Caco-2 (cell line): ENCODE measurements at regions of chr7 and their contacts with region 1.

Region 1: GRCh38 chr7:36487756-36488336 is 98.2 kb downstream of the ANLN start:
- DNase-seq: peak in 1 of 2 experiments; percentile 55
- H3K4me3 ChIP-seq: no peak overlapping the region
- H3K4me3 Mint-ChIP-seq: no peak overlapping the region
- H3K27ac Mint-ChIP-seq: no peak overlapping the region
- H3K4me1 ChIP-seq: peaks cover 12% of the 10 kb centered on the region; the same call in 1 of the 2 replicates
- H3K4me1 Mint-ChIP-seq: no peaks in the 10 kb centered on the region
- H3K27me3 ChIP-seq: no peaks in the 10 kb centered on the region
- H3K27me3 Mint-ChIP-seq: no peaks in the 10 kb centered on the region
- CTCF ChIP-seq: peak; percentile 74 to 78

Region 2: GRCh38 chr7:36440880-36441279 is 47.0 kb before region 1 on chr7:
- CTCF ChIA-PET with region 1: interaction called, 4 read pairs
- POLR2A ChIA-PET with region 1: no interaction called
- intact Hi-C with region 1: loop called (anchors 1 kb)
- DNase-seq: peak in 1 of 2 experiments; percentile 24
- H3K4me3 ChIP-seq: no peak overlapping the region
- H3K4me3 Mint-ChIP-seq: no peak overlapping the region
- H3K27ac Mint-ChIP-seq: no peak overlapping the region
- H3K4me1 ChIP-seq: peaks cover 13% of the 10 kb centered on the region
- H3K4me1 Mint-ChIP-seq: no peaks in the 10 kb centered on the region
- H3K27me3 ChIP-seq: no peaks in the 10 kb centered on the region
- H3K27me3 Mint-ChIP-seq: no peaks in the 10 kb centered on the region
- CTCF ChIP-seq: peak; percentile 36 to 42

Region 3: DNA sequence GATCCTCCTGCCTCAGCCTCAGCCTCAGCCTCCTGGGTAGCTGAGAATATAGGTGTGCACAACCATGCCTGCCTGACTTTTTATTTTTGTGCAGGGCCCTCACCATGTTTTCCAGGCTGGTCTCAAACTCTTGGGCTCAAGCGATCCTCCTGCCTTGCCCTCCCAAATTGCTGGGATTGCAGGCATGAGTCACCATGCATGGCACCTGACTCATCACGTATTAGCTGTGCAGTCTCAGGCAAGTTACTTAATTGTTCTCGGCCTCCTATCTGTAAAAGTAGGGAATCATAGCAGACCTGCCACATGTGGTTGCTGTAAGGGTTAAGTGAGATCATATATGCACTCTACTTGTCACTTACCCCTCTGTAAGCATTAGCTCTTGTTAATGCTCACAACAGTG is 19.0 kb after region 1 on chr7:
- CTCF ChIA-PET with region 1: no interaction called
- POLR2A ChIA-PET with region 1: no interaction called
- intact Hi-C with region 1: no loop called
- DNase-seq: no peak
- H3K4me3 ChIP-seq: no peak overlapping the region
- H3K4me3 Mint-ChIP-seq: no peak overlapping the region
- H3K27ac Mint-ChIP-seq: no peak overlapping the region
- H3K4me1 ChIP-seq: no peaks in the 10 kb centered on the region
- H3K4me1 Mint-ChIP-seq: no peaks in the 10 kb centered on the region
- H3K27me3 ChIP-seq: no peaks in the 10 kb centered on the region
- H3K27me3 Mint-ChIP-seq: peaks cover 2% of the 10 kb centered on the region
- CTCF ChIP-seq: no peak

Region 4: GRCh38 chr7:36670585-36671431 is 183.0 kb after region 1 on chr7:
- CTCF ChIA-PET with region 1: interaction called, 8 read pairs
- POLR2A ChIA-PET with region 1: no interaction called
- intact Hi-C with region 1: loop called (anchors 1 kb)
- DNase-seq: peak; percentile 57 to 74
- H3K4me3 ChIP-seq: no peak overlapping the region
- H3K4me3 Mint-ChIP-seq: no peak overlapping the region
- H3K27ac Mint-ChIP-seq: no peak overlapping the region
- H3K4me1 ChIP-seq: no peaks in the 10 kb centered on the region
- H3K4me1 Mint-ChIP-seq: no peaks in the 10 kb centered on the region
- H3K27me3 ChIP-seq: no peaks in the 10 kb centered on the region
- H3K27me3 Mint-ChIP-seq: no peaks in the 10 kb centered on the region
- CTCF ChIP-seq: peak; percentile 78 to 85